Activated T-helper 2 cell treated with anti-CD3 and anti-CD28 coated beads, Interferon-gamma antibody, Interleukin-2, Interleukin-4, amounts not matched to agents 10 μg/mL and 5 μg/mL and 100 μg/mL, durations not matched to agents 14 hours and 24 hours and 36 hours (primary cell): ENCODE measurements at regions of chr1 and their contacts with region 1.

Region 1: GRCh38 chr1:180631766-180632325 is at the start of gene XPR1:
- DNase-seq: peak; percentile 92
- H3K4me3 Mint-ChIP-seq: no peak within 1 kb of the TSS
- H3K27ac Mint-ChIP-seq: peak within 1 kb of the TSS; percentile 81
- H3K4me1 Mint-ChIP-seq: peaks cover 11% of the 10 kb centered on the region
- H3K27me3 Mint-ChIP-seq: peaks cover 5% of the 10 kb centered on the region
- total RNA-seq, gene XPR1: 20.8 and 23.6 TPM in 2 replicates

Region 2: DNA sequence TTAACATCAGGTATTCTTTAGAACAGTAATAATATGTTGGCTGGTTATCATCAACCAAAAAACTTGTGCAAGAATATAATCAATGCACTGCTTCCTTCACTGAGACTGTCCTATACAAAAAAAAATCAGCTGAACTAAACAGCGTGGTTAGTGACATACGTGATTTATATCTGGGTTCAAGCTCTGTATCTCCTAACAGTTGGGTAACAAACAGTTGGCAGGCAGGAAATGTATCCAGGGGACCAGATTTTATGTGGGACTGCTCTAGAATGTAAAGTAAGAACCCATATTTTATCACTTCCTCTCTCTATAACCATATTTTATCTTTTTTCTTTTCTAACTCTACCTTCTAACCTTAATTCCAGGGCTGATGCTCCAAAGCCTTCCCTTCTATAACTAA is 137.5 kb before region 1 on chr1:
- intact Hi-C with region 1: no loop called
- DNase-seq: no peak
- H3K4me3 Mint-ChIP-seq: no peak overlapping the region
- H3K27ac Mint-ChIP-seq: no peak overlapping the region
- H3K4me1 Mint-ChIP-seq: peaks cover 8% of the 10 kb centered on the region
- H3K27me3 Mint-ChIP-seq: no peaks in the 10 kb centered on the region

Region 3: GRCh38 chr1:180515864-180516388 is 115.9 kb before region 1 on chr1:
- intact Hi-C with region 1: loop called (anchors 5 kb)
- DNase-seq: peak; percentile 30
- H3K4me3 Mint-ChIP-seq: no peak overlapping the region
- H3K27ac Mint-ChIP-seq: no peak overlapping the region
- H3K4me1 Mint-ChIP-seq: peaks cover 1% of the 10 kb centered on the region
- H3K27me3 Mint-ChIP-seq: peaks cover 11% of the 10 kb centered on the region

Region 4: DNA sequence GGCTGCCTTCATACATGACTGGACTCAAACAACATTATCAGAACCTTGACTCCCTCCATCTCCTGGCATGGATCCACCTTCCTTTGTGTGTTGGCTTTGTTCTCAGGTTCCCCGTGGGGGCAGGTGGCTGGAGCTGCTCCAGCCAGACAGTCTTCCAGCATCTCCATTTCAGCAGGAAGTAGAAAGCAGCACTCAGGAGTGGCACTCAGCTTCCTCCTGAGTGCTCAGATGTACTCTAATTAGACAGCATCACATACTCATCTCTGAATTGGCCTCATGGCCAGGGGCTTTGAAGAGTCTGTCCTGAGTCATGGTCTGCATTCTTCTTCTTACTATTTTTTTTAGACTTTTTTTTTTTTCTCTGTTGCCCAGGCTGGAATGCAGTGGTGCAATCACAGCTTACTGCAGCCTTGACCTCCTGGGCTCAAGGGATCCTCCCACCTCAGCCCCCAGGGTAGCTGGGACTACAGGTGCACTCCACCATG is 45.1 kb before region 1 on chr1:
- intact Hi-C with region 1: loop called (anchors 5 kb)
- DNase-seq: no peak
- H3K4me3 Mint-ChIP-seq: no peak overlapping the region
- H3K27ac Mint-ChIP-seq: peak overlapping the region; percentile 72
- H3K4me1 Mint-ChIP-seq: peaks cover 26% of the 10 kb centered on the region
- H3K27me3 Mint-ChIP-seq: no peaks in the 10 kb centered on the region

Region 5: DNA sequence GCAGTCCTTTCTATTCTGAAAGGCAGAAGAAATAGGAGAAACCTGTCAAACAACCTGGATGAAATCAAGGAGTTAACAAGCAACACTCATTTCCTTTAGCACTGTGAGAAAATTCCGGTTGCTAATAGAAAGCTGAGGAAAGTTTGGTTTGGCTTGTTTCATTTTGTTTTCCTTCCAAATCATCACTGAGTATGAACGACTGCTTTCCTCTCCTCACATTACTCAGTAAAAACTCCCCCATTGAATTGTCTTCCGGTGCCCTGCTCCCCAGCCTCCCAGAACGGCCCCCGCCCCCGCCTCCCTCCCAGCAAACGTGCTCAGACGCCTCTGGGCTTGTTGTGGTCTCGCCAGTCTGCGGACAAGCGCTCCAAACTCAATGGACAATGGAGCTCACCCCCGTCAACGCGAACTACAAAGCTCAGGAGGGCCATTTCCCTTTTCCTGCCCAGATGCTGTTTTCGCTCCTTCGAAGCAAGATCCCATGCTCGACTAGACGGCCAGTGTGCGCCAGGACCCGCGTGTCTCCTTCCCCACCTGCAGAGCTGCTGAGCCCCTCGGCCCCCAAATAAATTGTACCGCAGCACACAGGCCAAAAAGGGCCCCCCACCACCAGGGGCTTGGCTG is 390.1 kb after region 1 on chr1:
- intact Hi-C with region 1: loop called (anchors 5 kb)
- DNase-seq: peak; percentile 41
- H3K4me3 Mint-ChIP-seq: peak overlapping the region; percentile 87
- H3K27ac Mint-ChIP-seq: peak overlapping the region; percentile 95
- H3K4me1 Mint-ChIP-seq: peaks cover 37% of the 10 kb centered on the region
- H3K27me3 Mint-ChIP-seq: peaks cover 17% of the 10 kb centered on the region

Region 6: DNA sequence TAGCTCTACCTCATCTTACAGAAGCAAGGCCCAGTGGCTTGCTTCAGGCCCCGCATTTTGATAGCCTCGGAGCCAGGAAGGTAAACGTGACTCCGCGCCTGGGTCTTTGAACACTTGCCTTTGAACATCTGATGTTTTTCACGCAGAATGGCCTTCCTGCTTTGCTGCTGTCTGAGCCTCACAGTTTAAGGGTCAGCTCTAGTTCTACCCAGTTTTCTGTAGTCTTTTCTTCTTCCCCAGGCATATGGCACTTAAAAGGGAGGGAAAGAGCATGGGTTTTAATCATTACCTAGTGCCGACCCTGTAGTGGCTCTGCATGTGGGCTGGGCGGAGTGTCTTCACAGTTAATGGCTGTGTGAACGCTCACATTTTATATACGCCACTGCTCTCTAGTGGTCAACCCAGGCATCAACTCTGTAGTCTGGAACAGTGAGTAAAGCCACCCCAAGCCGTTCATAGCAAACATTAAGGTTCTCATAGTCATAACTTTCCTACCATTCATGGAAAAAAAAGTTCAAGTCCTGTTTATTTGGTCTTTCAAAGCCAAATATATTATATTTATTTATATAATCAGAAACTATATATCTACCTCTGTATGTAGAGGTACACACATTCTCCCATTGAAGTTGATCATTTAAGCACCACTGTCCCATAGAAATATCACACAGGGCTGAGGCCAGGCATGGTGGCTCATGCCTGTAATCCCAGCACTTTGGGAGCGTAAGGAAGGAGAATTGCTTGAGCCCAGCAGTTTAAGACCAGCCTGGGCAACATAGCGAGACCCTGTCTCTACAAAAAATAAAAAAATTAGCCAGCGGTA is 534.7 kb after region 1 on chr1:
- intact Hi-C with region 1: loop called (anchors 10 kb)
- DNase-seq: peak; percentile 69
- H3K4me3 Mint-ChIP-seq: no peak overlapping the region
- H3K27ac Mint-ChIP-seq: no peak overlapping the region
- H3K4me1 Mint-ChIP-seq: peaks cover 5% of the 10 kb centered on the region
- H3K27me3 Mint-ChIP-seq: peaks cover 11% of the 10 kb centered on the region